ENCODE measurements at regions of chr1 and their contacts with region 1.

Region 1: GRCh38 chr1:145927063-145927886 is at the start of gene RBM8A:
- DNase-seq: peak; percentile 70 to 98 (median 96)
- ATAC-seq: peak; percentile 98
- H3K4me3 ChIP-seq: peak within 1 kb of the TSS; percentile 98
- H3K4me3 Mint-ChIP-seq: peak within 1 kb of the TSS in 4 of 10 donors; percentile 48 to 85 (median 75)
- H3K27ac ChIP-seq: peak within 1 kb of the TSS; percentile 100
- H3K27ac Mint-ChIP-seq: peak within 1 kb of the TSS in 3 of 9 donors; percentile 56 to 95 (median 94)
- H3K4me1 ChIP-seq: peaks cover 26 to 28% of the 10 kb centered on the region in 2 donors
- H3K4me1 Mint-ChIP-seq: peaks cover 11 to 33% (median 23%) of the 10 kb centered on the region in 7 donors
- H3K27me3 ChIP-seq: no peaks in the 10 kb centered on the region
- H3K27me3 Mint-ChIP-seq: no peaks in the 10 kb centered on the region
- total RNA-seq, gene RBM8A: 115 to 182 (median 120) TPM

Region 2: GRCh38 chr1:145823565-145824498 is 103.4 kb before region 1 on chr1 and contains the starts of genes POLR3C and RNF115:
- CTCF ChIA-PET with region 1: interaction called, 3 read pairs
- POLR2A ChIA-PET with region 1: interaction called, 5 read pairs
- intact Hi-C with region 1: loop called in 1 of 2 experiments (anchors 1 kb)
- DNase-seq: peak; percentile 63 to 88 (median 82)
- ATAC-seq: peak; percentile 95
- H3K4me3 ChIP-seq: peak within 1 kb of the TSS; percentile 99
- H3K4me3 Mint-ChIP-seq: peak within 1 kb of the TSS; percentile 91 to 100 (median 98)
- H3K27ac ChIP-seq: peak within 1 kb of the TSS; percentile 82
- H3K27ac Mint-ChIP-seq: peak within 1 kb of the TSS; percentile 91 to 98 (median 96)
- H3K4me1 ChIP-seq: peaks cover 10 to 14% of the 10 kb centered on the region in 2 donors
- H3K4me1 Mint-ChIP-seq: peaks cover 19 to 43% (median 35%) of the 10 kb centered on the region in 7 donors
- H3K27me3 ChIP-seq: no peaks in the 10 kb centered on the region
- H3K27me3 Mint-ChIP-seq: no peaks in the 10 kb centered on the region
- total RNA-seq, gene POLR3C: 22.0 to 44.4 (median 32.5) TPM
- total RNA-seq, gene RNF115: 11.4 to 17.3 (median 15.6) TPM

Region 3: GRCh38 chr1:145996433-145997015 is 69.2 kb after region 1 on chr1 and contains the start of gene TXNIP:
- CTCF ChIA-PET with region 1: interaction called, 4 read pairs
- POLR2A ChIA-PET with region 1: interaction called, 32 read pairs
- intact Hi-C with region 1: loop called in 1 of 2 experiments (anchors 1 kb)
- DNase-seq: peak; percentile 66 to 97 (median 94)
- ATAC-seq: peak; percentile 92
- H3K4me3 ChIP-seq: peak within 1 kb of the TSS; percentile 97
- H3K4me3 Mint-ChIP-seq: peak within 1 kb of the TSS; percentile 89 to 99 (median 98)
- H3K27ac ChIP-seq: peak within 1 kb of the TSS; percentile 91
- H3K27ac Mint-ChIP-seq: peak within 1 kb of the TSS; percentile 94 to 99 (median 97)
- H3K4me1 ChIP-seq: peaks cover 41 to 48% of the 10 kb centered on the region in 2 donors
- H3K4me1 Mint-ChIP-seq: peaks cover 43 to 72% (median 54%) of the 10 kb centered on the region in 7 donors
- H3K27me3 ChIP-seq: no peaks in the 10 kb centered on the region
- H3K27me3 Mint-ChIP-seq: peaks cover 0 to 3% (median 0%) of the 10 kb centered on the region in 5 donors
- total RNA-seq, gene TXNIP: 498 to 1,101 (median 659) TPM

Region 4: GRCh38 chr1:146007506-146008133 is 80.3 kb after region 1 on chr1:
- CTCF ChIA-PET with region 1: interaction called, 4 read pairs
- POLR2A ChIA-PET with region 1: interaction called, 10 read pairs
- intact Hi-C with region 1: loop called in 1 of 2 experiments (anchors 2 kb)
- DNase-seq: peak in 1 of 9 donors; percentile 31
- ATAC-seq: no peak
- H3K4me3 ChIP-seq: no peak overlapping the region
- H3K4me3 Mint-ChIP-seq: peak overlapping the region in 9 of 10 donors; percentile 73 to 93 (median 83)
- H3K27ac ChIP-seq: peak overlapping the region; percentile 64
- H3K27ac Mint-ChIP-seq: peak overlapping the region; percentile 86 to 97 (median 93)
- H3K4me1 ChIP-seq: peaks cover 18 to 36% of the 10 kb centered on the region in 2 donors
- H3K4me1 Mint-ChIP-seq: peaks cover 31 to 56% (median 45%) of the 10 kb centered on the region in 7 donors
- H3K27me3 ChIP-seq: no peaks in the 10 kb centered on the region
- H3K27me3 Mint-ChIP-seq: no peaks in the 10 kb centered on the region

Region 5: DNA sequence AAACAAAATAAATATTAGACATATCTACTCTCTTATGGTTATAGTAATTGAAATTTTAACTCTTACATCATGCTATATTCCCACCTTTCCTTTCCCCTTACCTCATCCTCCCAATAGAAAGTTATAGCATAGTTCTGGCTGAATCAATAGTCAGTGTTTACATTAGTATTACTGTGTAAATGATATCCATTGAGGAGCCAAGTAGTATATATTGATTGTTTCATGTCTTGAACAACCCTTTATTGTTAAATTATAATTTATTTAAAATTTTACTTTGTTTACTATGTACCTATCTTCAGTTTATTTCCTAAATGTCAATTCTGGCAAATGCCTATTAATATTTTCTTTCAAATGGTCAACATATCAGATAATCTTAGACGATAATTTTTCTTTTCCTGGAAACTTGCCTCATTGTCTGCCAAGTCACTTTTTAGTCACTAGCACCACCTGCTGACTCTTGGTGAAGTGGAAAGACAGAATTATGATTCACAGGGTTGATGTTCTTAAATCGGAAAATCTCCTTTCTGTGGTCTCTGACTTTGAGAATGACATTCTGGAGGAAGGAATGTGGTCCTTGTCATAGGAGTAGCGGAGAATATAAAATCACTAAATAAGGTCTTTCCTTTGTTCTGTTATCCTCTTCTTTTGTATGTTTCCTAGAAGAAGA is 85.6 kb after region 1 on chr1:
- CTCF ChIA-PET with region 1: interaction called, 3 read pairs
- POLR2A ChIA-PET with region 1: interaction called, 10 read pairs
- intact Hi-C with region 1: no loop called
- DNase-seq: peak in 7 of 9 donors; percentile 60 to 77 (median 65)
- ATAC-seq: peak; percentile 73
- H3K4me3 ChIP-seq: no peak overlapping the region
- H3K4me3 Mint-ChIP-seq: peak overlapping the region in 1 of 10 donors; percentile 53
- H3K27ac ChIP-seq: no peak overlapping the region
- H3K27ac Mint-ChIP-seq: no peak overlapping the region
- H3K4me1 ChIP-seq: peaks cover 0 to 1% of the 10 kb centered on the region in 2 donors
- H3K4me1 Mint-ChIP-seq: peaks cover 4 to 12% (median 10%) of the 10 kb centered on the region in 7 donors
- H3K27me3 ChIP-seq: no peaks in the 10 kb centered on the region
- H3K27me3 Mint-ChIP-seq: peaks cover 3 to 32% (median 4%) of the 10 kb centered on the region in 5 donors

Region 6: GRCh38 chr1:146036965-146037646 is 109.8 kb after region 1 on chr1:
- CTCF ChIA-PET with region 1: no interaction called
- POLR2A ChIA-PET with region 1: interaction called, 32 read pairs
- intact Hi-C with region 1: loop called (anchors 1 to 2 kb)
- DNase-seq: peak; percentile 52 to 88 (median 83)
- ATAC-seq: peak; percentile 66
- H3K4me3 ChIP-seq: peak overlapping the region; percentile 87
- H3K4me3 Mint-ChIP-seq: peak overlapping the region; percentile 95 to 99 (median 97)
- H3K27ac ChIP-seq: peak overlapping the region; percentile 69
- H3K27ac Mint-ChIP-seq: peak overlapping the region; percentile 93 to 100 (median 98)
- H3K4me1 ChIP-seq: peaks cover 0 to 6% of the 10 kb centered on the region in 2 donors
- H3K4me1 Mint-ChIP-seq: peaks cover 7 to 49% (median 39%) of the 10 kb centered on the region in 7 donors
- H3K27me3 ChIP-seq: no peaks in the 10 kb centered on the region
- H3K27me3 Mint-ChIP-seq: peaks cover 0 to 32% (median 0%) of the 10 kb centered on the region in 5 donors

Measured in naive thymus-derived CD4-positive, alpha-beta T cell (primary cell).